ENCODE measurements at regions of chr5 and their contacts with region 1.

Region 1: DNA sequence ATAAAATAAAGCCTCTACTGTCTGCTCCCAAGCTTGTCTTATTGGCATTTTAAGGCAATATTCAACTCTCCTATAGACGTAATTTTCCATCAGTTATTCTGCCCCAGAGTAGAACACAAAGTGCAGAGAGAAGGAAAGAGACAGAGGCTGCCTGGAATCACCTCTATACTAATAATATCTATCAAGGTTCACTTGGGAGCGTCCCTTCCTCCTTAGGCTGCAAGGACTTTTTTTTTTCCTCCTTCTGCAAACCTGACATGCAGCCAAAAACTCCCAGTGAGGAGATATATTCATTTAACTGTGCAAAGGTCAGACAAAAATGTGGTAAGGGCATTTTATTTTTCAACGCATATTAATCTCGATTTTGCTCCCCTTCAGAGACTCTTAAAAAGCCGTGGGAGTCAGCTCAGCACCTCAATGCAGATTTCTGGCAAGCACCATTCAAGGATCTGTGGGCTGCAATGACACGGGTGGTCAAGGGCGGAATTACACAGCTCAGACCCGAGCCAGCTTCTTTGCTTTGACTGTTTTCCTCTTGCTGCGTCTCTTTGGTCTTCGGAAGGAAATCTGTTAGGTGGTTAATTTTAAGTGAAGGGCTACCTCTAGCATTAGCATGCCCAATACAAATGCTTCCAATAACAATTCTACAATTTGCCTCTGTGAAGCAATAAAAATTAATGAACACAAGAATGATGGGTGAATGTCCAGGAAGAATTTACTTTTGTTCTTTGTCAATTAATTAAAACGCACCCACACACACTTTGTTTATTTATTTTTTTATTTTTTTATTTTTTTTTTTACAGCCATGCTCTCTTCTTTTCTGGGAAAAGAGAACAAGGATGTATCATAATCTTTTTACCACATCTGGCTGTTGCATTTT is 587.7 kb upstream of the GRAMD2B start:
- DNase-seq: peak; percentile 36
- ATAC-seq: peak; percentile 81
- H3K4me3 ChIP-seq: no peak overlapping the region
- H3K27ac ChIP-seq: no peak overlapping the region
- H3K4me1 ChIP-seq: no peaks in the 10 kb centered on the region
- H3K27me3 ChIP-seq: no peaks in the 10 kb centered on the region
- CTCF ChIP-seq: peak in 2 of 3 experiments; percentile 65 to 67; a peak in 4 of 6 replicates
- POLR2A ChIP-seq: no peak
- RAD21 ChIP-seq: peak; percentile 62

Region 2: DNA sequence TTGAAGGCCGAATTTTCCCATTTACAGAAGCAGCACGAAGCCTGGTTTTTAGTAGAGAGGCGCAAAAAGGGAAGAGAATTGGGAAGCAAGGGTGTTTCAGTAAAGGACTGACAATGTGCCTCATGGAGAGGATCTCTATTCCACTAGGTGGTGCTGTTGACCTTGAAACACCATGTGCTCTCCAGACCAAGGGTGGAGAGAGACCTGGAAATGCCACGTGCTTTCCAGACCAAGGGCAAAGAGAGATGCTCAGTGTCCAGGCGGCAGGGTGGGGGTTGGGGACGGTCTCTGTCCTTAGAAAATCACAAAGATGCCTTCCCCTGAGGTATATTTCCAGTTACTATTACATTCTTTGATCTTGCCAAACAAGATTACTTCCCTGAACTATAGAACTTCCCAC is 1898.3 kb before region 1 on chr5:
- CTCF ChIA-PET with region 1: no interaction called
- POLR2A ChIA-PET with region 1: no interaction called
- RAD21 ChIA-PET with region 1: no interaction called
- intact Hi-C with region 1: loop called (anchors 1 kb)
- DNase-seq: peak; percentile 72
- ATAC-seq: peak; percentile 96
- H3K4me3 ChIP-seq: no peak overlapping the region
- H3K27ac ChIP-seq: no peak overlapping the region
- H3K4me1 ChIP-seq: no peaks in the 10 kb centered on the region
- H3K27me3 ChIP-seq: no peaks in the 10 kb centered on the region
- CTCF ChIP-seq: peak; percentile 45 to 78 (median 64); a peak in 5 of 6 replicates
- POLR2A ChIP-seq: no peak
- RAD21 ChIP-seq: peak; percentile 94

Region 3: GRCh38 chr5:126054577-126055347 is 219.2 kb after region 1 on chr5:
- CTCF ChIA-PET with region 1: no interaction called
- POLR2A ChIA-PET with region 1: no interaction called
- RAD21 ChIA-PET with region 1: no interaction called
- intact Hi-C with region 1: no loop called
- DNase-seq: no peak
- ATAC-seq: no peak
- H3K4me3 ChIP-seq: no peak overlapping the region
- H3K27ac ChIP-seq: no peak overlapping the region
- H3K4me1 ChIP-seq: no peaks in the 10 kb centered on the region
- H3K27me3 ChIP-seq: no peaks in the 10 kb centered on the region
- CTCF ChIP-seq: no peak
- POLR2A ChIP-seq: no peak
- RAD21 ChIP-seq: no peak